ENCODE measurements at regions of chr4 and their contacts with region 1.

Region 1: GRCh38 chr4:140790765-140791164 is 34.6 kb upstream of the TBC1D9 start:
- DNase-seq: peak; percentile 86
- ATAC-seq: peak; percentile 94
- H3K4me3 ChIP-seq: no peak overlapping the region
- H3K27ac ChIP-seq: peak overlapping the region; percentile 62
- H3K4me1 ChIP-seq: peaks cover 29% of the 10 kb centered on the region
- H3K27me3 ChIP-seq: no peaks in the 10 kb centered on the region
- CTCF ChIP-seq: no peak
- EP300 ChIP-seq: peak; percentile 30 to 85; a peak in 2 of 4 replicates
- POLR2A ChIP-seq: no peak
- RAD21 ChIP-seq: no peak

Region 2: DNA sequence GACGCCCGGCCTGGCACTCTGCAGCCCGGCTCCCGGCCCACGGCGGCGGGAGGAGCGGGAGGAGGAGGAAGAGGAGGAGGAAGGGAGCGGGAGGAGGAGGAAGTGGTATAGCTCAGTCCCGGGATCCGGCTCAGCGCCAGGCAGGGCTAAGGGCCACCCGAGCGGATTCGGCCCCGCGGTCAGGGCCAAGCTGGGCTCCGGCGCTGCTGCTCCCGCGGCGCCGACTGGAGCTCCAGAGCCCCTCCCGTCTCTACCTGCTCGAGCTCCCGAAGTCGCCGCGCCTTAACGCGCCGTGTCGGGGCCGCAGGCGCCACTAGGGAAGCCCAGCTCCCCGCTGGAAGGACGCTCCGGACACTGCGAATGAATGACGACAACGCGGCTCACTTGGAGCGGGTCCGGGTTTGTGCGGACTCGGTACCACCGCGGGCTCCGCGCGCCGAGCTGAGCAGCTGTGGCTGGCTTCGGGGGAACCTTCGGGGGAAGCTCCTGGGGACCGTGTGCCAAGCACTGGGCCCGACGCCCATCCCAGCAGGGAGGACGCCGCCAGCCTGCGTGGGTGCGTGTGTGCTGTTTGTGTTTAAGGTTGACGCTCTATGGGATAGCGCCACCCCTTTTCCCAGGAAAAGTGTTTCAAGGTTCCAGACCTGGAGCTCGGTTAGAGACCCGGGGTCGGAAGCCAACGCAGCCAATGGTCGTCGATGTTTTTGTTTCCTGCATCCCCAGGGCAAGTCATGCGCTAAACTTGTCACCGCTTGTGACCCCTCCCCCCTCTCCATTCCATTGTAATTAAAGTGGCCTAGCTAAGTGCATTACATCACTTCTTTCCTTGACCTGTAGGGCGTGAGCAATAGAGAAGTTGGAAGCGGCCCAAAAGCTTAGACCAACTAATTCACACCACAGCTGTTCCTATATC is 34.2 kb before region 1 on chr4 and contains the start of gene TBC1D9:
- CTCF ChIA-PET with region 1: interaction called, 3 read pairs
- POLR2A ChIA-PET with region 1: no interaction called
- RAD21 ChIA-PET with region 1: interaction called, 3 read pairs
- SMC1A ChIA-PET with region 1: no interaction called
- in situ Hi-C with region 1: no loop called
- intact Hi-C with region 1: loop called (anchors 2 kb)
- DNase-seq: peak; percentile 25
- ATAC-seq: peak; percentile 62
- H3K4me3 ChIP-seq: peak within 1 kb of the TSS; percentile 78
- H3K27ac ChIP-seq: peak within 1 kb of the TSS; percentile 35; the same call in 1 of the 2 replicates
- H3K4me1 ChIP-seq: peaks cover 3% of the 10 kb centered on the region; the same call in 1 of the 2 replicates
- H3K27me3 ChIP-seq: no peaks in the 10 kb centered on the region
- CTCF ChIP-seq: no peak
- EP300 ChIP-seq: no peak
- POLR2A ChIP-seq: peak; percentile 54; the same call in 1 of the 2 replicates
- RAD21 ChIP-seq: no peak
- polyA plus RNA-seq, gene TBC1D9: 0.87 to 1.4 TPM